ENCODE measurements at regions of chr4 and their contacts with region 1.

Region 1: GRCh38 chr4:37891260-37892159 is 626 bp downstream of the TBC1D1 start:
- DNase-seq: peak; percentile 90
- H3K4me3 Mint-ChIP-seq: peak overlapping the region; percentile 90
- H3K27ac Mint-ChIP-seq: peak overlapping the region; percentile 95
- H3K4me1 Mint-ChIP-seq: peaks cover 42% of the 10 kb centered on the region
- H3K27me3 Mint-ChIP-seq: peaks cover 2% of the 10 kb centered on the region

Region 2: GRCh38 chr4:36322921-36323354 is 1568.6 kb before region 1 on chr4:
- intact Hi-C with region 1: loop called (anchors 5 kb)
- DNase-seq: peak; percentile 90
- H3K4me3 Mint-ChIP-seq: peak overlapping the region; percentile 21
- H3K27ac Mint-ChIP-seq: peak overlapping the region; percentile 93
- H3K4me1 Mint-ChIP-seq: peaks cover 71% of the 10 kb centered on the region
- H3K27me3 Mint-ChIP-seq: no peaks in the 10 kb centered on the region

Region 3: GRCh38 chr4:36676139-36677050 is 1215.1 kb before region 1 on chr4:
- intact Hi-C with region 1: no loop called
- DNase-seq: no peak
- H3K4me3 Mint-ChIP-seq: no peak overlapping the region
- H3K27ac Mint-ChIP-seq: no peak overlapping the region
- H3K4me1 Mint-ChIP-seq: no peaks in the 10 kb centered on the region
- H3K27me3 Mint-ChIP-seq: no peaks in the 10 kb centered on the region

Region 4: DNA sequence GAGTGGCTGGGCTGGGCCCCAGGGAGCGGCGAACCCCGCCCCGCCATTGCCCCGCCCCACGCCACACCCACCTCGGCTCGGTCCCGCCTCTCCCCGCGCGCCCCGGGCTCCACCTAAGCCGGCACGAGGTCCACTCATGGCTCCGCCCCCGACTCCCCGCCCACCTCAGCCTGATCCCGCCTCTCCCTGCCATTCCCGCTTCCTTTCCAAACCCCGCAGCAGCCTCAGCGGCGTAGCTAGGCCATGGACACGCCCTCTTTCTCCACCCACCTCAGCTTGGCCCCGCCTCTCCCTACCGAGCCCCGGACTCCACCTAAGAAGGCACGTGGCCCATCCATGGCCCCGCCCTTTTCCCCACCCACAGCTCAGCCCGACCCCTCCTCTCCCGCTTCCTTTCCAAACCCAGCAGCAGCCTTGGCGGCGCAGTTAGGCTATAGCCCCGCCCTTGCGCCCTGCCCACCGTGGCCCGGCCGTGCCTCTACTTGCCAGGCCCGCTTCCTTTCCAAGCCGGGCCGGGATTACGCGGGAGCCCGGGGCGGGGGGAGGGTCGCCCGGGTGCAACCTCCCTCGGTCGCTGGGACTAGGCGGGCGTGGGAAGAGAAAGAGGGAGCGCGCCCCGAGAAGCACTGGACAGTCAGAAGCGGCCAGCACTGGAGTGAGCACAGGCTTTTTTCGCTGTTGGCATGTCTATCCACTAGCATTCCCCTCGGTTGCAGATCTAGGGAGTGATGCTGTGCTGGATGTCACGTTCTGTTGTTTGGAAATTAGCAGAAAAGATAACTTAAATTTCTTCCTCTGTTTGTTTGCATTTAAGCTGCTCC is 204.9 kb before region 1 on chr4 and contains the start of gene RELL1:
- intact Hi-C with region 1: loop called (anchors 1 kb)
- DNase-seq: peak; percentile 100
- H3K4me3 Mint-ChIP-seq: peak within 1 kb of the TSS; percentile 91
- H3K27ac Mint-ChIP-seq: peak within 1 kb of the TSS; percentile 96
- H3K4me1 Mint-ChIP-seq: peaks cover 36% of the 10 kb centered on the region
- H3K27me3 Mint-ChIP-seq: peaks cover 8% of the 10 kb centered on the region
- total RNA-seq, gene RELL1: 15.7 and 19.1 TPM in 2 replicates

Region 5: GRCh38 chr4:37780444-37781150 is 110.9 kb before region 1 on chr4:
- intact Hi-C with region 1: no loop called
- DNase-seq: peak; percentile 86
- H3K4me3 Mint-ChIP-seq: no peak overlapping the region
- H3K27ac Mint-ChIP-seq: peak overlapping the region; percentile 2
- H3K4me1 Mint-ChIP-seq: peaks cover 13% of the 10 kb centered on the region
- H3K27me3 Mint-ChIP-seq: no peaks in the 10 kb centered on the region

Region 6: GRCh38 chr4:37873386-37873785 is 18.1 kb before region 1 on chr4:
- intact Hi-C with region 1: loop called (anchors 2 kb)
- DNase-seq: no peak
- H3K4me3 Mint-ChIP-seq: no peak overlapping the region
- H3K27ac Mint-ChIP-seq: no peak overlapping the region
- H3K4me1 Mint-ChIP-seq: peaks cover 14% of the 10 kb centered on the region
- H3K27me3 Mint-ChIP-seq: no peaks in the 10 kb centered on the region

Region 7: GRCh38 chr4:37922328-37922727 is 30.8 kb after region 1 on chr4:
- intact Hi-C with region 1: no loop called
- DNase-seq: no peak
- H3K4me3 Mint-ChIP-seq: no peak overlapping the region
- H3K27ac Mint-ChIP-seq: no peak overlapping the region
- H3K4me1 Mint-ChIP-seq: peaks cover 5% of the 10 kb centered on the region
- H3K27me3 Mint-ChIP-seq: no peaks in the 10 kb centered on the region

Region 8: GRCh38 chr4:37953620-37954293 is 62.2 kb after region 1 on chr4:
- intact Hi-C with region 1: loop called (anchors 1 kb)
- DNase-seq: no peak
- H3K4me3 Mint-ChIP-seq: no peak overlapping the region
- H3K27ac Mint-ChIP-seq: no peak overlapping the region
- H3K4me1 Mint-ChIP-seq: peaks cover 11% of the 10 kb centered on the region
- H3K27me3 Mint-ChIP-seq: no peaks in the 10 kb centered on the region

Region 9: GRCh38 chr4:38034986-38035882 is 143.7 kb after region 1 on chr4:
- intact Hi-C with region 1: loop called (anchors 5 kb)
- DNase-seq: peak; percentile 82
- H3K4me3 Mint-ChIP-seq: no peak overlapping the region
- H3K27ac Mint-ChIP-seq: no peak overlapping the region
- H3K4me1 Mint-ChIP-seq: no peaks in the 10 kb centered on the region
- H3K27me3 Mint-ChIP-seq: no peaks in the 10 kb centered on the region

Region 10: GRCh38 chr4:39032218-39033085 is 1140.9 kb after region 1 on chr4 and contains the start of gene TMEM156:
- intact Hi-C with region 1: loop called (anchors 5 kb)
- DNase-seq: peak; percentile 81
- H3K4me3 Mint-ChIP-seq: peak within 1 kb of the TSS; percentile 88
- H3K27ac Mint-ChIP-seq: peak within 1 kb of the TSS; percentile 89
- H3K4me1 Mint-ChIP-seq: peaks cover 37% of the 10 kb centered on the region
- H3K27me3 Mint-ChIP-seq: no peaks in the 10 kb centered on the region
- total RNA-seq, gene TMEM156: 25.9 and 26.9 TPM in 2 replicates

Measured in activated CD4-positive, alpha-beta T cell treated with anti-CD3 and anti-CD28 coated beads, Interleukin-2, amount 10 ng/mL, durations not matched to agents 24 days and 14 days (primary cell).